ENCODE measurements at regions of chr6 and their contacts with region 1.

Region 1: GRCh38 chr6:43575772-43576551 is at the starts of genes POLH and XPO5:
- DNase-seq: peak; percentile 96
- total RNA-seq, gene POLH: 9.8 TPM
- total RNA-seq, gene XPO5: 20.3 TPM

Region 2: DNA sequence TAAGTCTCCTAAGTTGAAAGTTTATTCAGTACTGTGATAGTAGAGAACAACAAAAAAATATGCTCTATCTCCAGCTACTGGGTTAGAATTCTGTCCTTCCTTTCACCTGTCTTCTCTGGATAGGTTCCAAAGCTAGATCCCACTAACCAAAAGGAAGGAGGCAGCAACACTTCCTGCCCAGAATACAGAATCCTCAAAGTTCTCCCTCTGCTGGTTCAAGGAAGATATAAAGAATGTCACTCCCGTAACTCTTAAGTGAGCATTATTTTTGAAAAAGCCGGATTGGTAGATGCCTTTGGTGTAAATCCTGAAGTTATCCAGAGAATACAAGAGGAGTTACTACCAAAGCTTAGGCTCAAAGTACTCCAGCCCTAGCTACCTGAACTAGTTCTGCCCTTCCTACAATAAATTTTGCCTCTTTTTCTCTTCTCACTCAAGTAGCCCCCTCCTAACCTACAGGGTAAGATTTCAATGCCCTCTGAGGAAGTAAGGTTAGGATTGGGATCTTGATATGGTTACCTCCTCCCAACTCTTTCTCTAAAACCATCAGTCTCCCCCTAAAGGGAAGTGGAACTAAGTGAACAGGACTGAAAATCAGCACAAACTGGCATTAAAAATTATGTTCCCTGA is 241.4 kb before region 1 on chr6:
- intact Hi-C with region 1: no loop called
- DNase-seq: no peak

Region 3: GRCh38 chr6:43386492-43386891 is 189.5 kb before region 1 on chr6:
- intact Hi-C with region 1: no loop called
- DNase-seq: no peak

Region 4: DNA sequence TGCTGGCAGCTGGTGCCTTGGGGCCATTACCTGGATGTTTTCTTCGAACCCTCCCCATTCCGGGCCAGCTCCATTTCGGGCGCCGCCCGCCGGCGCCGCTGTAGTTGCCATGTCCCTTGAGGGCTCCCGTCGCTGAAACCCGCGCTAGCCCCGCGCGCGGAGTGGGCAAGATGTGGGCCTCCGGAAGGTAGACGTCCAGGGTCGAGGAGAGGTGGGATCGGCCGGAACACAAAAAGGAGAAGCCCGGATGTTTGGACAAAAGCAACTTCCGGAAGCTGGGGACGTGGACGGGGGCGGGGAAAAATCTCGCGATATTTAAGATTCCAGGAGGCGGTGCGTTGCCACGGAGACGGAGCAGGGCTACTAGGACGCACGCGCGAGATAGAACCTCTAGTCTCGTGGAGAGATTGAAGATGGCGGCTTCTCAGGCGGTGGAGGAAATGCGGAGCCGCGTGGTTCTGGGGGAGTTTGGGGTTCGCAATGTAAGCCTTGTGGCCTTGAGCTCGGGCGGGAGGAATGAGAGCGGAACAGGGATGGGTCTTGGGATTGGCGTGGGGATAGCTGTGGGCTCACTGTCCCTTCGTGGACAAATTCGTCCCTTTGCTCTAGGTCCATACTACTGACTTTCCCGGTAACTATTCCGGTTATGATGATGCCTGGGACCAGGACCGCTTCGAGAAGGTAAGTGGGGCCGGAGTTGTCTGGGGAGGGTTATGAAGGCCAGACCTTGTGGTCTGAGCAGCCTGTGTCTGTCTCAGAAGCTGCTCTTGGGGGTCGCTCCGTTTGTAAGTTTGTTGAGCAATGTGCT is 59.1 kb before region 1 on chr6 and contains the starts of genes POLR1C and YIPF3:
- intact Hi-C with region 1: loop called (anchors 5 kb)
- DNase-seq: peak; percentile 98
- total RNA-seq, gene POLR1C: 14.8 TPM
- total RNA-seq, gene YIPF3: 65.7 TPM

Region 5: DNA sequence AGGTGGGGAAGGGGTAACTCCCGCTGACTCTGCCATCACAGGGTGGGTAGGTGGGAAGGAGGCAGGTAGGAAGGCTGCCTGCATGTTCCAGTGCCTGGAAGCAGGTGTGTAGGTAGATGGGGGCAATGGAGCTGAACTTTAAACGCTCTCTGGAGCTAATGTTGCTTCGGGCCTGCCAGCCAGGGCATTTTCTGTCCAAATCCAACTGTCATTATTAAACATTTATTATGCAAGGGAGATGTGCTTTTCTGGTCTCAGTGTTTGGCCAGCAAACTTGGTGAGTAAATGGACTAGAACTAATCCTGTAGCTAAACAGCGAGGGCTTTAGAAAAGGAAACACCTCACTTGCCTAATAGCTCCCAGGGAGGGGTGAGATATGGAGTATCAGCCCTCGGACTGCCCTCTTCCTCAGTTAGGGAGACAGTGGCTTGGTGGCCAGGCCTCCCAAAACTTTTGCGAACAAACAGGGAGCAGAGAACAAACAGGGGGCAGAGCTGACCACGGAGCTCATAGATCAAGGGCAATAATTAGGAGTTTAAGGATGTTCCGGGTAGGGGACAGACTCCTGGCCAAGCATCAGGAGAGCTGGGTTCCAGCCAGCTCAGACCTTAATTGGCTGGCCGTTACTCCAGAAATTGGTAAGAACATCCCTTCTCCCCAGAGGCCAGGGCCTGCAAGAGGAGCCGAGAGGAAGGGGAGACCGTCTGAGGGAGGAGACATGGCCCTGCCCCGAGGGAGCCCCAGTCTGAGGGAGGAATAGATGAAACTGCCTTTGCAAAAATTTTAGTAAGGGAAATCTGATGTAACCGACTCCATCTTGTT is 325.2 kb after region 1 on chr6:
- intact Hi-C with region 1: no loop called
- DNase-seq: no peak

Measured in cardiac septum (tissue), 1 donor.